ENCODE measurements at regions of chr6 and their contacts with region 1.

Region 1: GRCh38 chr6:43075670-43076463 is at the start of gene PTK7:
- DNase-seq: peak; percentile 47
- H3K4me3 Mint-ChIP-seq: peak within 1 kb of the TSS; percentile 81
- H3K27ac Mint-ChIP-seq: peak within 1 kb of the TSS; percentile 61
- H3K4me1 Mint-ChIP-seq: peaks cover 14% of the 10 kb centered on the region
- H3K27me3 Mint-ChIP-seq: no peaks in the 10 kb centered on the region
- CTCF ChIP-seq: no peak
- total RNA-seq, gene PTK7: 42.6 and 48.4 TPM in 2 replicates

Region 2: DNA sequence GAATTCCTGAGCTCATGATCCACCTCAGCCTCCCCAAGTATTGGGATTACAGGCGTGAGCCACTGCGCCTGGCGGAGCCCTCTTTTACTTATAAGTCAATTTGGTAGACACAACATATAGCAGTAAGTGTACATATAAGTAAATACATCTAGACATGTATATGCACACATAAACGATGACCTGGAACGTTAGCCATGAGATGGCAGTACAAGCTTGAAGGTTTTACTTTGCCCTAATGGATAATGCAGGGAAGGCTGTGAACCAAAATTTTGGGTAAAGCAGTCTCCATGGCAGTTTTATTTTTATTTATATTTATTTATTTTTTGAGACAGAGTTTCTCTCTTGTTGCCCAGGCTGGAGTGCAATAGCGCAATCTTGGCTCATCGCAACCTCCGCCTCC is 117.7 kb before region 1 on chr6:
- CTCF ChIA-PET with region 1: no interaction called
- POLR2A ChIA-PET with region 1: no interaction called
- intact Hi-C with region 1: no loop called
- DNase-seq: no peak
- H3K4me3 Mint-ChIP-seq: no peak overlapping the region
- H3K27ac Mint-ChIP-seq: no peak overlapping the region
- H3K4me1 Mint-ChIP-seq: peaks cover 7% of the 10 kb centered on the region
- H3K27me3 Mint-ChIP-seq: no peaks in the 10 kb centered on the region
- CTCF ChIP-seq: no peak

Region 3: DNA sequence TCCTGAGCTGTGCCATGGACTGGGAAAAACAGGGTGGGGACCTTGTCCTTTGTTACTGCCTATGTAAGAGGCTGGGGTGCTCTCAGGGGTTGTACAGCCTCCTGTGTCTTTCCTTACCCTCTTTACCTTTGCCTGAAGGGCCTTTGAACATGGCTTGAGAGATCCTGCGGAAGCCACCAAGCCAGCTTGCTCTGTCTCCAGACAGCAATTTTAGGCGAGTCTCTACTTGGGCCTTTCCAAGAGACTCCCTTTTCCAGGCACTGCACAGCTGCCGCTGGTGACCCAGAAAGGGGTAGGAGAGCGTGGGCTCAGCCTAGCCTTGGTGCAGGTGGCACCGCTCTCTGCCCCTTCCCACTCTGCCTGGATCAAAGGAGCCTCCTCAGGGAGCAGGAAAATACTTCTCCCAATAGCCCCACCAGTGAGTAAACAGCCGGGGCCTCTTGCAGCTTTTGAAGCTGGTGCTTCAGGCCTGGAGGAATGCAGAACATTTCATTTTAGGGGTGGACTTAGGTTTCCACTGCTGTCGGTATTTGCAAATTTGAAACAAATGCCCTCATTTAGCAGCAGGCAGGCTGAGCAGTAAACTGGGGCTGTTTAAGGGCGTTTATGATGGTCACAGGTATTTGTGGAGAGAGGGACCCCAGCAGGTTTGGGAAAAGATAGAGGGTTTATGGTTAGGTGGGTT is 14.1 kb after region 1 on chr6:
- CTCF ChIA-PET with region 1: interaction called, 4 read pairs
- POLR2A ChIA-PET with region 1: interaction called, 31 read pairs
- intact Hi-C with region 1: no loop called
- DNase-seq: no peak
- H3K4me3 Mint-ChIP-seq: no peak overlapping the region
- H3K27ac Mint-ChIP-seq: peak overlapping the region; percentile 79
- H3K4me1 Mint-ChIP-seq: peaks cover 26% of the 10 kb centered on the region
- H3K27me3 Mint-ChIP-seq: no peaks in the 10 kb centered on the region
- CTCF ChIP-seq: no peak

Region 4: GRCh38 chr6:43096451-43097097 is 20.7 kb after region 1 on chr6:
- CTCF ChIA-PET with region 1: interaction called, 6 read pairs
- POLR2A ChIA-PET with region 1: interaction called, 40 read pairs
- intact Hi-C with region 1: no loop called
- DNase-seq: peak; percentile 83
- H3K4me3 Mint-ChIP-seq: peak overlapping the region; percentile 55
- H3K27ac Mint-ChIP-seq: peak overlapping the region; percentile 92
- H3K4me1 Mint-ChIP-seq: peaks cover 31% of the 10 kb centered on the region
- H3K27me3 Mint-ChIP-seq: no peaks in the 10 kb centered on the region
- CTCF ChIP-seq: no peak

Region 5: GRCh38 chr6:43120944-43121913 is 45.4 kb after region 1 on chr6:
- CTCF ChIA-PET with region 1: interaction called, 4 read pairs
- POLR2A ChIA-PET with region 1: interaction called, 17 read pairs
- intact Hi-C with region 1: no loop called
- DNase-seq: peak; percentile 97
- H3K4me3 Mint-ChIP-seq: no peak overlapping the region
- H3K27ac Mint-ChIP-seq: peak overlapping the region; percentile 73
- H3K4me1 Mint-ChIP-seq: peaks cover 36% of the 10 kb centered on the region
- H3K27me3 Mint-ChIP-seq: no peaks in the 10 kb centered on the region
- CTCF ChIP-seq: no peak

Region 6: DNA sequence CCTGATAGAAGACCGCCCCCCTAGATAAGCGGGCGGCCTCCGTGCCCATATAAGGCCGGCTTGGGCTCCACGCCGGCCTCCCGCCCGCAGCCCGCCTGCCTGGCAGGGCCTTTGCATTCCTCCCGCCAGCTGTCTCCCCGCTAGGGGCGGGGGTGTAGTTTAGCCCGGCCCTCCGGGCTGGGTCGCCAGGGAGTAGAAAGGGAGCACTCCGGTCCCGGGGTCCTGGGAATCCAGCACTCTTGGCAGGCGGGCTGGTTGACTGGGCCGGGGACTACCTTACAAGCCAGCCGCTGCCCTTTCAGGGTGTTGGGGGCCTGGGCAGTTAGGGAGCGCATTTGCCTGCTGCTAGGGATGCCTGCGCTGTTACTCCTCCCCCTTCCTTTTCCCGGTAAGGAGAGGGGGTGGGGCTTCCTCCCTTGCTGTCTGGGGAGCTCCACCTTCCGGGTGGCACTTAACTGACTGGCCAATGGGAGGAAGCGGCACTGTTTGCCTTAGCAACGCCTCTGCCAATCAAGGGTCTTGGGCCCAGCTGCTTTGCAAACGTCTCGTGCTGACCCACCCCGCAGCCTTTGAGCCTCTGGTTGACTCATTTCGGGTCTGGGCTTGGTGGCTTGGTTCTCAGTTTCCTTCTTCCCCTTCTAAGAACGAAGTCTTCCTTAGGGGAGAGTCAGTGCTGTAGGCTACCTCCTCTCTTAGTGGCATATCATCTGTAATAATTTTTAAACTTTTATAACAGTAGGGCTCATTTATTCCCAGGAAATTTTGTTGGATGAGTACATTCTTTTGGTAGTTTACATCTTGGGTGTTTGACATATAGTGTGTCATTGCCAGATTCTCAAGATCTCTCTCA is 98.6 kb after region 1 on chr6:
- CTCF ChIA-PET with region 1: no interaction called
- POLR2A ChIA-PET with region 1: interaction called, 17 read pairs
- intact Hi-C with region 1: no loop called
- DNase-seq: peak; percentile 99
- H3K4me3 Mint-ChIP-seq: peak overlapping the region; percentile 87
- H3K27ac Mint-ChIP-seq: peak overlapping the region; percentile 83
- H3K4me1 Mint-ChIP-seq: peaks cover 30% of the 10 kb centered on the region
- H3K27me3 Mint-ChIP-seq: no peaks in the 10 kb centered on the region
- CTCF ChIP-seq: no peak